Activated T-helper 1 cell treated with anti-CD3 and anti-CD28 coated beads, Interleukin-12 subunit alpha, Interleukin-12 subunit beta, Interleukin-2, Interleukin-4 antibody, amounts not matched to agents 30 ng/mL and 10 ng/mL and 1 ng/mL, durations not matched to agents 14 hours and 24 hours and 36 hours (primary cell): ENCODE measurements at regions of chr2 and their contacts with region 1.

Region 1: DNA sequence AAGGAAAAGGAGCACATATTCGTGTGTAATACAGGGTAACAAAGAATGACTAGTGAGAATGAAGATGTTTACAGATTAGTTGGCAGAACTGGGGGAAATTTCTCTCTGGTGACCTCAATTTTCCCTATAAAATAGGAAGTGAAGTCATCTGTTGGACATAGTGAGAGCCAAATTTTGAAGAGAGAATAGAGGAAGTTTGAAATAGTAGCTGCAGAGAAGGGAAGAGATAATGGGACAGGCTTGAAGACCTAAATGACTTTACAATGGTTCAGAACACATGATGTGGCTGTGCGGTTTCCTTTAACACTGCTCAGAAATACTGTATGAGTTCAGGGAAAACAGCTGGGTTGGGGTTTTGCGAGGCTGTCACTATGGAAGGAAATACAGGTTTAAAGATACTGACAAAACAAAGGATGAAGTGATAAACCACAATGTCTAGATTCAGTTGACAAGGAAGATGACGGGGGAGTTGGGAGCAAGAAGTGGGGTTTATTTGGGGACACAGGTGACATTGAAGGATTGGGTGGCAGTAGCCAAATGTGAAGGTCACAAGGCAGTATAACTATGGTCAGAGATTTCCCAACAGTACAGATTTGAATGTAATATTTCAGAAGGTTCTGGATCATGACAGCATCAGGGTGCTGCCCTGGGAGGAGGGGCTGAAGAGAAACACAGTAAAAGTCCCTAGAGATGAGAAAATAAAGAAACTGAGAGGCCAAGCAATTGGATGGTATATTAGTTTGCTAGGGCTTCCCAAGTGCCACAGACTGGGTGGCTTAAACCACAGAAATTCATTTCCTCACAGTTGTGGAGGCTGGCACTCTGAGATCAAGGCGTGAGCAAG is 82.6 kb upstream of the TANK start:
- DNase-seq: peak; percentile 82
- H3K4me3 Mint-ChIP-seq: peak overlapping the region; percentile 54
- H3K27ac Mint-ChIP-seq: peak overlapping the region; percentile 95
- H3K4me1 Mint-ChIP-seq: peaks cover 77% of the 10 kb centered on the region
- H3K27me3 Mint-ChIP-seq: peaks cover 1% of the 10 kb centered on the region

Region 2: DNA sequence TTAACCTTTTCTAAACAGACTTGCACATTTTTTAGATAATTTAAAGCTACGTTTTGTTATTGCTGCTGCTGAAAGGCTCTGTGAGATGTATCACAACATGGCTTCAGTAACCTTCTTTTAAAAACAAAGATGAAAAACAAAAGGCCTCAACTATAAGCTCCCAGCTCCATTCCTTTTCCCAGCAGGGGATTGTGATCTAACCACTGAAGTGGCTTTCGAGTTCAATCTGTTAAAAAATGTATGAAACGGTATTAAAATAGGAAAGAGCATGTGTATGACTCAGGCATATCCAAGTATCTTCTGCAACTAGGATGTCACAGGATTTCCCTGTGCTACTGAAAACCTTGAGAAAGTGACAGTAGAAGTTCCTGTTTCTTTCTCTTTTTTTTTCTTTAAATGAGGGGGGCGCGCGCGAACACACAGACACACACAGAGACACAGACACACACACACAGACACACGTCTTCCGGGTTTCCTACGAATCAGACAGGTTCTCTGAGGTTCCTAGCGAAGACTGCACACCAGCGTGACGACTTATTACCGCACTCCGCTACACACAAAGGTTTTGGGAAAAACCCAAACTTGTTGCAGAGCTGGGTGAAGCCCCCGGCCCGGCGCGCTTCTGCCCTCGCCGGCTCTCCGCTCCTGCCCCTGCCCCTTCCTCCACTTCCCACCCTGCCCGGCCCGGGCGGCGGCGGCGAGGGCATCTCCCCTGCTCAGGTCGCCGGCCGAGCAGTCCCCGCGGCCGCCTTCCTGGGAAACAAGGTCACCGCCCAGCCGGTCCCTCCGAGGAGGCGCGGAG is 670.8 kb before region 1 on chr2:
- intact Hi-C with region 1: loop called (anchors 1 kb)
- DNase-seq: peak; percentile 66
- H3K4me3 Mint-ChIP-seq: peak overlapping the region; percentile 90
- H3K27ac Mint-ChIP-seq: peak overlapping the region; percentile 92
- H3K4me1 Mint-ChIP-seq: peaks cover 83% of the 10 kb centered on the region
- H3K27me3 Mint-ChIP-seq: no peaks in the 10 kb centered on the region

Region 3: GRCh38 chr2:161090411-161090810 is 12.8 kb after region 1 on chr2:
- intact Hi-C with region 1: loop called (anchors 1 kb)
- DNase-seq: peak; percentile 44
- H3K4me3 Mint-ChIP-seq: peak overlapping the region; percentile 64
- H3K27ac Mint-ChIP-seq: peak overlapping the region; percentile 87
- H3K4me1 Mint-ChIP-seq: peaks cover 55% of the 10 kb centered on the region
- H3K27me3 Mint-ChIP-seq: no peaks in the 10 kb centered on the region

Region 4: GRCh38 chr2:161160226-161161069 is 82.9 kb after region 1 on chr2 and contains the start of gene TANK:
- intact Hi-C with region 1: loop called (anchors 1 kb)
- DNase-seq: peak; percentile 88
- H3K4me3 Mint-ChIP-seq: peak within 1 kb of the TSS; percentile 97
- H3K27ac Mint-ChIP-seq: peak within 1 kb of the TSS; percentile 99
- H3K4me1 Mint-ChIP-seq: peaks cover 81% of the 10 kb centered on the region
- H3K27me3 Mint-ChIP-seq: no peaks in the 10 kb centered on the region
- total RNA-seq, gene TANK: 136 and 141 TPM in 2 replicates

Region 5: GRCh38 chr2:161190050-161190449 is 112.5 kb after region 1 on chr2:
- intact Hi-C with region 1: no loop called
- DNase-seq: no peak
- H3K4me3 Mint-ChIP-seq: no peak overlapping the region
- H3K27ac Mint-ChIP-seq: no peak overlapping the region
- H3K4me1 Mint-ChIP-seq: peaks cover 76% of the 10 kb centered on the region
- H3K27me3 Mint-ChIP-seq: no peaks in the 10 kb centered on the region

Region 6: DNA sequence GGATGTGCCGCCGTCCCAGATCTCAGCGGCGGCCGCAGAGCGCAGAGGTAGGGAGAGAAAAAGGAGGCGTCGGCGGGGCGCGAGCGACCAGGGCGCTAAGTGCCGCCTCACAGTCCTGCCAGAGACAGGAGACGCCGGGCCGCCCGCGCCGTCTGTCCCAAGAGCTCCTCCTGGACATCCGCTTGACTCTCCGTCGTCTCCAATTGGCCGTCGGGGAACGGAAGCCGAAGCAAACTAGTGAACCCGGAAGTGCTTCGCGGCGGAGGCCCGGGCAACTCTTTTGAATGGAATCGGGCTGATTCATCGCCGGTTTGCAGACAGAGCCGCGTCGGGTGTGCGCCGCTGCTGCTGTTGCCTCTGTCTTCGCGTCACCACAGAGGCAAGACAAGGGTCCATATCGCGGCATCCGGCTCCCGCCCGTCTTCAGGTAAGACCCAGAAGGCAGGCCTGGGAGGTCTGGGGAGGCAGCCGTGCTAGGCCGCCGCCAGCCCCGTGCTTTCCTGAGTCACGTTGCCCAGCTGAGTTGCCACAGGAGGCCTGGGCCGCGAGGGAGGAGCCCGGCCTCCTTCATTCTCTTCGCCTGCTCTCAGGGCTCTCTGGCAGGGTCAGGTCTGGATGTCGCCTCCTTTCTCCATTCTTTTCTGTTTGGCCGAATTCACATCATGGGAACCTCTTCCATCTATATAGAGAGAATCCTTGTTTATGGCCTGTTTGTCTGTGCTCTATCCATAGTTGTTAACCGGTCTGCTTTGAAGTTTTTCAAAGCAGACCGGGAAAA is 230.8 kb after region 1 on chr2 and contains the start of gene PSMD14:
- intact Hi-C with region 1: loop called (anchors 5 kb)
- DNase-seq: peak; percentile 90
- H3K4me3 Mint-ChIP-seq: peak within 1 kb of the TSS; percentile 91
- H3K27ac Mint-ChIP-seq: peak within 1 kb of the TSS; percentile 94
- H3K4me1 Mint-ChIP-seq: peaks cover 33% of the 10 kb centered on the region
- H3K27me3 Mint-ChIP-seq: peaks cover 5% of the 10 kb centered on the region
- total RNA-seq, gene PSMD14: 103 and 113 TPM in 2 replicates

Region 7: DNA sequence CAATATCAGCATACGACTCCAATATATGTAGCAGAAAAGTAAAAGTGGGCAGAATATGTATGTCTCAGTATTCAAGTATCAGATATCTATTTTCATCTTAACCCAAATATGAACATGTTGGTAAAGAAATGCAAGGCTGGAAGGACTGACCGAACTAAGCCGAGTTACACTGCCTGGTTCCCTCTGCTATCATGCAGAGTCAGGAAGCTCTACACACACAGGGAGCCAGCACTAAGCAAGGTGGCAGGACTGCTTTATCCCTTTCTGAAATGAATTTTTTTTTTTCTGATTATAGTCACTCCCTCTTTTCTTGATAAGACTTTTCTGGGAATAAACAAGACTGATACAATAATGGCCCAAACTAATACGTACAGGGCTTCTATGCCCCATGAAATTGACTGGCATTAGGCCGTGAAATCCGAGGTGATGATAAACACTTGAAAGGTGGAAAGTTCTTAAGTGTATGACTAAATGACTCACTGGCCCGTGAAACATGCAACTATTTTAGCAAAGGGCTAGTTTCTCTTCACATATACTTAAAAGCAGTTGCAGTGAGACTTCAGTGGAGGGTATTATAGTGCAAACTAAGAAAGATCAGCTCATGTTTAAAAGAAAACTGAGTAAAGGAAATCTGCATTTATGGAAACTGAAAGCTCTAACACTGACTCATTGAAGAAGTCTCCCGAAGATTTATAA is 981.5 kb after region 1 on chr2:
- intact Hi-C with region 1: loop called (anchors 10 kb)
- DNase-seq: peak; percentile 25
- H3K4me3 Mint-ChIP-seq: peak overlapping the region; percentile 75
- H3K27ac Mint-ChIP-seq: peak overlapping the region; percentile 96
- H3K4me1 Mint-ChIP-seq: peaks cover 93% of the 10 kb centered on the region
- H3K27me3 Mint-ChIP-seq: no peaks in the 10 kb centered on the region